Cardiac septum (tissue), 1 donor: ENCODE measurements at regions of chr14 and their contacts with region 1.

Region 1: DNA sequence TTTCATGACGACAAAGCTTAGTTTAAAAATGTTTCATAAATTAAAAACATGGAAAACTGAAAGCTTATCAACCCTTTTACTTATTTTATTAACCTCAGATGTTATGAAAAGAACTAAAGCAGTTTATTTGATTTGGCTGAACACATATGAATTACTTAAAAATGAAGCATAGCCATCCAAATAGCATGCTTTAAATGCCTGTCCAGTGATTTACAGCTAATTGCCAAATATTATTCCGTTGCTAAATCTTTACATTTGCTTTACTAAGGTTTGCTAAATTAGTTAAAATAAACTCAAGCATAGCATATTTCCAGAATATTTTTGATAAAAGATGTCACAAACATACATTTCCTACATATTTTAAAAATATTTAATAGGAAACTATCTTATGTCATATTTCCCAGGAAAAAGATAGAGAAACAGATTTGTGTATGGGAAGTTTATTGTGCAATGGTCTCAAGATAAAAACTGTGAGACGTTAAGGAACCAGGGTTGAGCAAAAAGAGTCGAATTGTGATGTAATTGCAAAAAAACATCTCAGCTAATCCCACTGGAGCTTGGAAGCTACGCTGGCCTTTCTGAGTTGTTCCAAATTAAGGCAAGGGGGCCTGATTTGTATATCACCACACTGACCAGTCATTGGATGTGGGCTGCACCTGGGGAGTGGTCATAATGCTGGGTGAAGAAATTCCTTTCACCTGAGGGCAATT is 25.8 kb downstream of the GPR135 start:
- DNase-seq: no peak

Region 2: GRCh38 chr14:59126710-59127432 is 312.5 kb before region 1 on chr14:
- intact Hi-C with region 1: loop called (anchors 2 kb)
- DNase-seq: no peak

Region 3: DNA sequence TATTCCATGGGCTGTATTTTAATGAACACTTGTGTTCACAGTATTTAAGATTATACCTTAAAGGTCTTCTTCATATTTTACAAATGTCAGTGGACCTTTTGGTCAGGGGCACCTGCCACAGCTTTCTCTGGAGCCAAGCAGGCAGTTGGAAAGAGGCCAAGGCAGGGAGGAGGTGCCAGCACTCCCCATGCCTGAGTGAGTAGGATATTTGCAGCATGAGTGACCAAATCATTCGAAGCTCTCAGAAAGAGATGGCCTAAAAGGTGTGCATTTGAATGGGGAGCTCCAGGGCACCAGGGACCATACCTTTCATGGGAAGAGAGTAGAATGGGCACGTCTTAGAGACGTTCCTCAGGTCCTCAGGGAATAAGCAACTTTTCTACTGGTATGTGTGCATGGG is 95.8 kb before region 1 on chr14:
- intact Hi-C with region 1: no loop called
- DNase-seq: peak; percentile 77

Region 4: DNA sequence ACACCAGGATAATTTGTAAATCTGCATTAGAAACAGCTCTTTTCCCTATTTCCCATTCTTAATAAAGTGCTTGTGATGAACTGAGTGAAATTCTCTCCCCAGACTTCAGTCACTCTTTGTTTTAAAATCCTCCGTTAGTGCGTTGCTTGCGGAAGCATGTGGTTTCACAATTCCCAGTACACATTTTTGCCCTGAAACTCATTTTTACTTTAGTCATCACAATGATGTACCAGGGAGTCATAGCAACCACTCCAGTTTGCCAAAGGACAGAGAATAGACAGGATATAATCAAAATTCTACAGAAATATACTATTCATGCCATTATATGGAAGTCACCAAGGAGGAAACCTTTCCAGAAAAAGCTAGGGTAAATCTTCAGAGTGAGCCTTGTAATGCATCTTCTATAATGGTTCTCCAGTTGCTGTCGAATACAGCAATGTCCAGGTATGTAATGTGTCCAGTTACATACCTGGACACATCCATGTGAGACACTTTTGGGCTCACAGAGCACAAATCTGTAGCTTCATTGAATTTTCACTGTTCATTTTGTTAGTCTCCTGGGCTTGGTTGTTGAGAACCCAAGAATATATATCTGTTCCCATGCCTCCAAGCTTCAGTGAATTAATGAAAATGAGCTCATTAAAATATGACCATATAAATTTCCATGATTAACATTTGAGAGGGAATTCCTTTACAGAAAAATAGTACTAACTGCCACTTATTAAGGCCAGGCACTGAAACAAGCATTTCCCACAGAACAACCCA is 32.0 kb before region 1 on chr14:
- intact Hi-C with region 1: no loop called
- DNase-seq: no peak